AG04450 (cell line): ENCODE measurements at regions of chr9 and their contacts with region 1.

Region 1: GRCh38 chr9:100598641-100599145 is 20.8 kb downstream of the CAVIN4 start:
- DNase-seq: no peak
- H3K4me3 ChIP-seq: peak overlapping the region; percentile 63
- H3K27ac ChIP-seq: no peak overlapping the region
- H3K27me3 ChIP-seq: peaks cover 5% of the 10 kb centered on the region
- CTCF ChIP-seq: no peak

Region 2: DNA sequence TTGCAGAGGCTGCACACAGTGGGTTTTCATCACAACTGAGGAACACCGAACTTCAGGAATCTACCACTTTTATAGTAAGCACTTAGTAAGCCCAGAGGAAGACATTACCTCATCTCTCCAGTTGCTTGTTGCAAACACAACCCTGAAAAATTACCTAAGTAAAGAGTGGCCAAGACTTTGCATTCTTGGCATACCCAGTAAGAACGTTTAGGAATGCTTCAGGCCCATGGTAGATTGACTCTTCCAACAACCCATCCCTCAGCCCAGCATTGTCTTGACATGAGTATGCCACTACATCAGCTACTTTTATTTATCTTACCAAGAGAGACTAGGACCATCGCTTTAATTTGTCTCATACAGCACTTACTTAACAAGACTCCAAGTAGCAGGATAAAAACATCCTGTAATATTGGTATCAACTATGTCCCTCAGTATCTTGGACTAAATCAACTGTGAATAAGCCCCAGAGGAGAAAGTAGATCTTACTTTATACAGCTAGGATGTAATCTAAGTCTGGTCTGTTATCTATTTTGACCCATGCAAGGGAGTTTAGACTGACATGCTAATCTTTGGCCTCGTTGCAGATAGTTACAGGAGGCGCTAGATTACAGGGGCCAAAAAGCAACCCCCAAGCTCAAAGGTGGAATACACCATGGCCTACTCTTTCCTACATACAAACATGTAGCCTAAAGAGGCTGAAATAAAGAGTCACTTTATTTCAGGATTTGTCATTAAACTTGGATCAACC is 384.8 kb before region 1 on chr9:
- CTCF ChIA-PET with region 1: interaction called, 10 read pairs
- POLR2A ChIA-PET with region 1: no interaction called
- DNase-seq: peak; percentile 13
- H3K4me3 ChIP-seq: no peak overlapping the region
- H3K27ac ChIP-seq: no peak overlapping the region
- H3K27me3 ChIP-seq: no peaks in the 10 kb centered on the region
- CTCF ChIP-seq: no peak

Region 3: GRCh38 chr9:100515578-100516494 is 82.9 kb before region 1 on chr9:
- CTCF ChIA-PET with region 1: interaction called, 10 read pairs
- POLR2A ChIA-PET with region 1: no interaction called
- DNase-seq: no peak
- H3K4me3 ChIP-seq: no peak overlapping the region
- H3K27ac ChIP-seq: no peak overlapping the region
- H3K27me3 ChIP-seq: no peaks in the 10 kb centered on the region
- CTCF ChIP-seq: no peak

Region 4: GRCh38 chr9:100581661-100582060 is 17.0 kb before region 1 on chr9:
- CTCF ChIA-PET with region 1: interaction called, 22 read pairs
- POLR2A ChIA-PET with region 1: interaction called, 3 read pairs
- DNase-seq: no peak
- H3K4me3 ChIP-seq: no peak overlapping the region
- H3K27ac ChIP-seq: no peak overlapping the region
- H3K27me3 ChIP-seq: no peaks in the 10 kb centered on the region
- CTCF ChIP-seq: no peak

Region 5: DNA sequence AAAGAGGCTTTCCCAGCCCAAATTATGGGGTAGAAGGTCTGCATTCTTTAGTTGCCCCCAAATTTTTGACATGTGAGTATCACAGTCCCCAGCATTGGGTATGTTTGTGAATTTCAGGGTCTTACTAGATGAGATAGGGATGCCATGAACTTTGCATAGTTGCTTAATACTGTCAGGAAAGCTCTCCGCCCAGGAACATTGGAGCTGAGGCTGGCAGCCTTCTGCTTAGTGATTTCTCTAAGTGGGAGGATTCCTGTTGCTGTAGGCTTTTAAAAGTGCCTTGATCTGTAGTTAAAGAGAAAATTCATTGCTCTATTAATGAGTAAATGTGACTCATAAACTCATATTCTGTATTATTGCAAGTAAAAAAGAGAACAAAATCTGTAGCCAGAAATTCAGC is 186.1 kb after region 1 on chr9:
- CTCF ChIA-PET with region 1: no interaction called
- POLR2A ChIA-PET with region 1: no interaction called
- DNase-seq: no peak
- H3K4me3 ChIP-seq: no peak overlapping the region
- H3K27ac ChIP-seq: no peak overlapping the region
- H3K27me3 ChIP-seq: no peaks in the 10 kb centered on the region
- CTCF ChIP-seq: no peak

Region 6: DNA sequence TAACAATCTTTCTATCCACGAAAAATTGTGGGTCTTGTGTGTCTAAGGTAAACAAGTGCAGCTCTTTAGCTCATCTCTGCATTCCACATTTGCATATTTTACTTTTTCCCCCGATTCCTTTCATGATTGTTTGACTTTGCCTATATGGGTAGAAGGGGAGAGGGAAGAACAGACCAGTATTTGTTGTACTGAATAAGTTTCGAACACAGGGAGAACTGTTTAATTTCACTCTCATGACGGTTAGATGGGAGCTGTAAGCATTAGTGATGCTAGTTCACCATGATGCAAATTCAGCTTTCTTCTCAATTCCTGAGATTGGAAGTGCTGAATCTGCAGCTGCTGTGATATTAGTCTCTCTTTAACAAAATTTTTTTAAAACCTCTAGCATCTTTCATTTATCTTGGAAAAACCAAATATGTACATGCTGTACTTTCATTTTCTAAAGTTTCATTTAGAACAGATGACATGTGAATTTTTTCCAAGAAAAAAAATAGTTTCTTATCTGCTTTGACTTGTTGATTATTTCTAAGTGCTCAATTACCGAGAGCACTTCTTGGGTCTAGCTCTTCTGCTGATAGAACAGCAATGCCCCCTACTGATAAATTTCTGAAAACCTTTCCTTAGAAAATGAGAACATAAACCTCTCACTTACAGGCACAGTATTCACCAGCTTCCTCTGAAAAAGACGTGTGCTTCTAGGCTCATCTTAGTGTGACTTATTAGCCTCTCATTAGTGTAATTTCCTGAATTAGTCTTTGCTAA is 636.6 kb after region 1 on chr9:
- CTCF ChIA-PET with region 1: interaction called, 16 read pairs
- POLR2A ChIA-PET with region 1: no interaction called
- DNase-seq: no peak
- H3K4me3 ChIP-seq: no peak overlapping the region
- H3K27ac ChIP-seq: no peak overlapping the region
- H3K27me3 ChIP-seq: no peaks in the 10 kb centered on the region
- CTCF ChIP-seq: peak; percentile 11; the same call in 1 of the 2 replicates